ENCODE measurements at regions of chr17 and their contacts with region 1.

Region 1: GRCh38 chr17:7823581-7824397 is 10.2 kb upstream of the KDM6B start:
- DNase-seq: no peak
- ATAC-seq: no peak
- H3K4me3 ChIP-seq: no peak overlapping the region
- H3K27ac ChIP-seq: no peak overlapping the region
- H3K4me1 ChIP-seq: no peaks in the 10 kb centered on the region
- H3K27me3 ChIP-seq: peaks cover 0 to 34% of the 10 kb centered on the region in 2 experiments; a peak in 3 of 5 replicates
- CTCF ChIP-seq: no peak
- EP300 ChIP-seq: no peak
- POLR2A ChIP-seq: no peak
- RAD21 ChIP-seq: no peak

Region 2: GRCh38 chr17:7740481-7741001 is 83.2 kb before region 1 on chr17:
- CTCF ChIA-PET with region 1: interaction called, 3 read pairs
- POLR2A ChIA-PET with region 1: no interaction called
- in situ Hi-C with region 1: no loop called
- intact Hi-C with region 1: loop called (anchors 5 kb)
- DNase-seq: no peak
- ATAC-seq: no peak
- H3K4me3 ChIP-seq: no peak overlapping the region
- H3K27ac ChIP-seq: no peak overlapping the region
- H3K4me1 ChIP-seq: peaks cover 14% of the 10 kb centered on the region
- H3K27me3 ChIP-seq: peaks cover 11 to 54% of the 10 kb centered on the region in 2 experiments
- CTCF ChIP-seq: no peak
- EP300 ChIP-seq: no peak
- POLR2A ChIP-seq: no peak
- RAD21 ChIP-seq: no peak

Region 3: GRCh38 chr17:7792611-7793010 is 31.2 kb before region 1 on chr17:
- CTCF ChIA-PET with region 1: no interaction called
- POLR2A ChIA-PET with region 1: no interaction called
- in situ Hi-C with region 1: no loop called
- intact Hi-C with region 1: loop called (anchors 1 kb)
- DNase-seq: no peak
- ATAC-seq: no peak
- H3K4me3 ChIP-seq: no peak overlapping the region
- H3K27ac ChIP-seq: no peak overlapping the region
- H3K4me1 ChIP-seq: no peaks in the 10 kb centered on the region
- H3K27me3 ChIP-seq: peaks cover 2 to 51% of the 10 kb centered on the region in 2 experiments; a peak in 4 of 5 replicates
- CTCF ChIP-seq: no peak
- EP300 ChIP-seq: no peak
- POLR2A ChIP-seq: no peak
- RAD21 ChIP-seq: no peak

Region 4: DNA sequence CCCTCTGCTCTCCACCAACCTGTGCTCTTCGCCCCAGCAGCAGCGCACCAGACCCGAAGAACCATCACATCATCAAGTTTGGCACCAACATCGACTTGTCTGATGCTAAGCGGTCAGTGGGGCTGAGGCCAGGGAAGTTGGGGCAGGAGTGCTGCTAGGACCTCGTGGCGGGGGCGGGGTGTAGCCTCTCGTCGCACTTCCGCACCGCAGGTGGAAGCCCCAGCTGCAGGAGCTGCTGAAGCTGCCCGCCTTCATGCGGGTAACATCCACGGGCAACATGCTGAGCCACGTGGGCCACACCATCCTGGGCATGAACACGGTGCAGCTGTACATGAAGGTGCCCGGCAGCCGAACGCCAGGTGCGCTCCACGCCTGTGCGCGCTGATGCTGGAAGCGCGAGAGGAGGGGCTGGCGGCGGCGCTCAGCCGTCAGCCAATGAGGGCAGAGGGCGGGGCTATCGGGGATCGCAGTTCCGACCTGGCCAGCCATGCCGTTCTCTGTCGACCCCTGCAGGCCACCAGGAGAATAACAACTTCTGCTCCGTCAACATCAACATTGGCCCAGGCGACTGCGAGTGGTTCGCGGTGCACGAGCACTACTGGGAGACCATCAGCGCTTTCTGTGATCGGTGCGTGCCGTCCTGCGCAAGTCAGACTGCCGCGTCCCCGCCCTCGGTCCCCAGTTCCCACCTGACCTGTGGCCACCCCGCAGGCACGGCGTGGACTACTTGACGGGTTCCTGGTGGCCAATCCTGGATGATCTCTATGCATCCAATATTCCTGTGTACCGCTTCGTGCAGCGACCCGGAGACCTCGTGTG is 27.9 kb after region 1 on chr17:
- CTCF ChIA-PET with region 1: interaction called, 28 read pairs
- POLR2A ChIA-PET with region 1: interaction called, 7 read pairs
- in situ Hi-C with region 1: no loop called
- intact Hi-C with region 1: loop called (anchors 1 kb)
- DNase-seq: peak; percentile 64
- ATAC-seq: peak; percentile 66
- H3K4me3 ChIP-seq: no peak overlapping the region
- H3K27ac ChIP-seq: no peak overlapping the region
- H3K4me1 ChIP-seq: peaks cover 13% of the 10 kb centered on the region
- H3K27me3 ChIP-seq: no peaks in the 10 kb centered on the region
- CTCF ChIP-seq: peak; percentile 97
- EP300 ChIP-seq: no peak
- POLR2A ChIP-seq: peak in 1 of 2 experiments; percentile 28; a peak in 2 of 4 replicates
- RAD21 ChIP-seq: peak; percentile 96

Region 5: GRCh38 chr17:7897773-7898172 is 74.0 kb after region 1 on chr17:
- CTCF ChIA-PET with region 1: interaction called, 10 read pairs
- POLR2A ChIA-PET with region 1: no interaction called
- in situ Hi-C with region 1: loop called (anchors 5 kb)
- intact Hi-C with region 1: no loop called
- DNase-seq: peak; percentile 62
- ATAC-seq: peak; percentile 87
- H3K4me3 ChIP-seq: no peak overlapping the region
- H3K27ac ChIP-seq: no peak overlapping the region
- H3K4me1 ChIP-seq: peaks cover 15% of the 10 kb centered on the region
- H3K27me3 ChIP-seq: no peaks in the 10 kb centered on the region
- CTCF ChIP-seq: peak; percentile 74
- EP300 ChIP-seq: no peak
- POLR2A ChIP-seq: no peak
- RAD21 ChIP-seq: peak; percentile 86

Measured in HepG2 (cell line).